HCT116 (cell line): ENCODE measurements at regions of chr4 and their contacts with region 1.

Region 1: GRCh38 chr4:168076989-168077725 is 15.2 kb upstream of the ANXA10 start:
- DNase-seq: peak; percentile 88
- ATAC-seq: peak; percentile 78
- H3K4me3 ChIP-seq: no peak overlapping the region
- H3K27ac ChIP-seq: peak overlapping the region; percentile 85
- H3K4me1 ChIP-seq: peaks cover 7 to 21% of the 10 kb centered on the region in 2 experiments
- H3K27me3 ChIP-seq: no peaks in the 10 kb centered on the region
- CTCF ChIP-seq: peak; percentile 74 to 93 (median 91); a peak in 5 of 6 replicates
- POLR2A ChIP-seq: no peak
- RAD21 ChIP-seq: peak; percentile 96

Region 2: DNA sequence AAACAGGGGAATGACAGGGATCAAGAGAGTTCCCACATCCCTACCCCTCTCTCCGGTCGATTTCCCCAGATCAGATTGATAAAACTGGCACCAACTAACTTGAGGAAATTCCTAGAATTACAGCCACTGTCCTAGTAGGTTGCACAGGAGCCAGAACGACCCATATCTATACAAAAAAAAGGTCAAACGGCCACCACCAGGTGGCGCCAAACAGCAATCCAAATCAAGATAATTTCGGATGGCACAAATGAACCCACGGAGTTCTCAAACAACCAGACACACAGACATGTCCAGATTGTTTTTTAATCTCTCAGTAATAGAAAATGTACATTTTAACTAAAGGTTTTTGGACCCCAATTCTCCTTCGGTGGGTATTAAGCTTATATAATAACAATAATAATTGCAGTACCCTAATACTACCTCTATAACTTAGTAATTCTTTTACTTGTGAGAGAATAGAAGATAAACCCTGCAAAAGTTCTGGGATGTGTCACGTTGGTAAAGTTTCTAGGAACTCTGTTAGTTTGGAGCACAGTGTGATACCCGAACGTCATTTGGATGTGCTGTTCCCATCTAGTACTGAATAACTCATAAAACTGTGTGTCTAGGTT is 1055.5 kb before region 1 on chr4:
- CTCF ChIA-PET with region 1: no interaction called
- POLR2A ChIA-PET with region 1: no interaction called
- RAD21 ChIA-PET with region 1: no interaction called
- intact Hi-C with region 1: loop called (anchors 1 kb)
- DNase-seq: peak; percentile 66
- ATAC-seq: peak; percentile 94
- H3K4me3 ChIP-seq: no peak overlapping the region
- H3K27ac ChIP-seq: no peak overlapping the region
- H3K4me1 ChIP-seq: no peaks in the 10 kb centered on the region; a peak in 1 of 4 replicates
- H3K27me3 ChIP-seq: no peaks in the 10 kb centered on the region
- CTCF ChIP-seq: peak; percentile 60 to 87 (median 65); a peak in 5 of 6 replicates
- POLR2A ChIP-seq: no peak
- RAD21 ChIP-seq: peak; percentile 84

Region 3: DNA sequence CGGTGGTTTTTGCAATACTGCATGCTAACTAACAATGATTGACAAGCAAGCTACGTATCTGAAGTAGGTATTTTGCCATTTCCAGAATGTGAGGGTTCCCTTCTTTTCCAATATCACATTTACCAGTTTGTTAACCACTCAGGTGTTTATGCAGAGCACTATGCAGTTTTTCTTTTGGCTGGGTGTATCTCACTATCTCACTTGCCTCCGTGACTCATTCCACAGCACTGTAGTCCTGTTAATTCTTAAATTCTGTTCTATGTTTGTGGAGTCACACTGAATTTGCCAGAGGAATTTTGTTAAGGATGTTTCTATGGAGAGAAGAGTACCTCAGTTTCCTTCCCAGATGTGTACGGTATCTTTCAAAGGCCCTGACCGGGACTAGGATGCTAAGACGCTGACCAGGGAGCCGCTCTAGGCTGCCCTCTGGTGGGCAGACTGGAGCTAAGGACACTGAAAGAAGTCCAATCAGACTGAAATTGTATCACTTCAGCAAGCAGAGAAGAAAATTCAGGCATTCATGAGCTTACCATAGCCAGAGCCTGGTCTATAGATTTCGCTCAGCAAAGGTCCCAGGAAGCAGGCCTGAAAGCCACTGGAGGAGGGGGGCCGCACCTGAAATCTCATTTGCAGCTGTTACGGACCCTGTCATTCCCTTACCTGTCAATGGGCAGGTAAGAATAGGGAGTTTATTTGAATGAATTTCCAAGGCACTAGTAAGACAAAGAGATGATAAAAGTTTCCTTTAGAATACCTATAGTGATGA is 454.5 kb before region 1 on chr4:
- CTCF ChIA-PET with region 1: no interaction called
- POLR2A ChIA-PET with region 1: no interaction called
- RAD21 ChIA-PET with region 1: no interaction called
- intact Hi-C with region 1: loop called (anchors 5 kb)
- DNase-seq: peak; percentile 46
- ATAC-seq: peak; percentile 99
- H3K4me3 ChIP-seq: no peak overlapping the region
- H3K27ac ChIP-seq: no peak overlapping the region
- H3K4me1 ChIP-seq: no peaks in the 10 kb centered on the region
- H3K27me3 ChIP-seq: no peaks in the 10 kb centered on the region
- CTCF ChIP-seq: peak; percentile 46 to 89 (median 84); a peak in 5 of 6 replicates
- POLR2A ChIP-seq: no peak
- RAD21 ChIP-seq: peak; percentile 73

Region 4: DNA sequence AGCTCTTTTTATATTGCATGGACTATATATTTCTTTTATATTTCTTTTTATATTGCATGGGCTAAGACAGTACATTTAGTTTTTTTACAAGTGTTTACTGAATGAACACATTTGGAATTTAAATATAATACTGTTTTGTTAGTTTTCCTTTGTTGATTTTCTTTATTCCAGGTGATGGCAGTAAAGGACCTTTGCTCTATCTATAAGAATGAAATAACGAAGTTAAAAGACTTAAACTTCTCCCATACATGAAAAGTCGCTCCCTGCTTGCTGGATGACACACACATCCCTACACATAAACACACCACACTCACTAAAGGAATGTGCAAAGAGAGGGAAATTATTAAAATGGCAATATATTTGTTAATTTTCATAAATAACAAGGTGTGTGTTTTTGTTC is 87.3 kb before region 1 on chr4:
- CTCF ChIA-PET with region 1: no interaction called
- POLR2A ChIA-PET with region 1: no interaction called
- RAD21 ChIA-PET with region 1: no interaction called
- intact Hi-C with region 1: loop called (anchors 1 kb)
- DNase-seq: peak; percentile 4
- ATAC-seq: peak; percentile 38; the same call in 1 of the 2 replicates
- H3K4me3 ChIP-seq: no peak overlapping the region
- H3K27ac ChIP-seq: no peak overlapping the region
- H3K4me1 ChIP-seq: no peaks in the 10 kb centered on the region
- H3K27me3 ChIP-seq: no peaks in the 10 kb centered on the region
- CTCF ChIP-seq: peak in 2 of 3 experiments; percentile 30 to 57; a peak in 2 of 6 replicates
- POLR2A ChIP-seq: no peak
- RAD21 ChIP-seq: peak; percentile 68

Region 5: DNA sequence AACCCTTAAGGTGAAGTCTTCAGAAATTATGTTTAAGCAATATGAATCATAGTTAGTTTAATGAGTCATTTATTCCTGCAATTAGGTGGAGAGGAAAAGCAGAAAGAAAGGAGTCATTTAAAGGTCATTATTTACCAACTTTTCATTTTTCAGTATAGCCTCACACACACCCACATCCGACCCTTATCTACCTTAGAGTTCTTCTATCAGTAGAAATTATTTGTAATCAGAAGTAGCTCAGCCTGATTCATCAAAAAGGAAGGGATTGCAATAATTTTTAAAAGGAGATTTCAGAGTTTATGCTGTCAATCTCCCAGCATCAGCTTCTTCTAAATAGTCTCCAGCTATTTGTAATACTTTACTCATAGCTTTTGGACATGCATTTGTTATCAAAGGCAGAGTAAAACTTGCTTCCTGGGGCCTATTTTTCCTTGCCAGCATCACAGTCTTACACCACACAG is 21.1 kb after region 1 on chr4:
- CTCF ChIA-PET with region 1: interaction called, 3 read pairs
- POLR2A ChIA-PET with region 1: interaction called, 3 read pairs
- RAD21 ChIA-PET with region 1: no interaction called
- intact Hi-C with region 1: loop called (anchors 2 kb)
- DNase-seq: peak; percentile 92
- ATAC-seq: peak; percentile 78
- H3K4me3 ChIP-seq: peak overlapping the region in 1 of 2 experiments; percentile 9; a peak in 1 of 4 replicates
- H3K27ac ChIP-seq: peak overlapping the region; percentile 97
- H3K4me1 ChIP-seq: peaks cover 46 to 62% of the 10 kb centered on the region in 2 experiments
- H3K27me3 ChIP-seq: no peaks in the 10 kb centered on the region
- CTCF ChIP-seq: no peak
- POLR2A ChIP-seq: no peak
- RAD21 ChIP-seq: peak; percentile 29

Region 6: DNA sequence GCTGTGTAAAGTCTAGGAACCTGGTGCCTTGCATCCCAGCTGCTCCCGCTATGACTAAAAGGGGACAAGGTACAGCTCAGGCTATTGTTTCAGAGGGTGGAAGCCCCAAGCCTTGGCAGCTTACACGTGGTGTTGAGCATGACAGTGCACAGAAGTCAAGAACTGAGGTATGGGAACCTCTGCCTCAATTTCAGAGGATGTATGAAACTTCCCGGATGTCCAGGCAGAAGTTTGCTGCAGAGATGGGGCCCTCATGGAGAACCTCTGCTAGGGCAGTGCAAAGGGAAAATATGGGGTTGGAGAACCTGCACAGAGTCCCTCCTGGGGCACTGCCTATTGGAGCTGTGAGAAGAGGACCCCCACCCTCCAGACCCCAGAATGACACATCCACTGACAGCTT is 164.8 kb after region 1 on chr4:
- CTCF ChIA-PET with region 1: no interaction called
- POLR2A ChIA-PET with region 1: no interaction called
- RAD21 ChIA-PET with region 1: no interaction called
- intact Hi-C with region 1: no loop called
- DNase-seq: no peak
- ATAC-seq: no peak
- H3K4me3 ChIP-seq: no peak overlapping the region
- H3K27ac ChIP-seq: no peak overlapping the region
- H3K4me1 ChIP-seq: no peaks in the 10 kb centered on the region
- H3K27me3 ChIP-seq: no peaks in the 10 kb centered on the region
- CTCF ChIP-seq: no peak
- POLR2A ChIP-seq: no peak
- RAD21 ChIP-seq: no peak